Posterior vena cava (tissue), 2 donors: ENCODE measurements at regions of chr20 and their contacts with region 1.

Region 1: DNA sequence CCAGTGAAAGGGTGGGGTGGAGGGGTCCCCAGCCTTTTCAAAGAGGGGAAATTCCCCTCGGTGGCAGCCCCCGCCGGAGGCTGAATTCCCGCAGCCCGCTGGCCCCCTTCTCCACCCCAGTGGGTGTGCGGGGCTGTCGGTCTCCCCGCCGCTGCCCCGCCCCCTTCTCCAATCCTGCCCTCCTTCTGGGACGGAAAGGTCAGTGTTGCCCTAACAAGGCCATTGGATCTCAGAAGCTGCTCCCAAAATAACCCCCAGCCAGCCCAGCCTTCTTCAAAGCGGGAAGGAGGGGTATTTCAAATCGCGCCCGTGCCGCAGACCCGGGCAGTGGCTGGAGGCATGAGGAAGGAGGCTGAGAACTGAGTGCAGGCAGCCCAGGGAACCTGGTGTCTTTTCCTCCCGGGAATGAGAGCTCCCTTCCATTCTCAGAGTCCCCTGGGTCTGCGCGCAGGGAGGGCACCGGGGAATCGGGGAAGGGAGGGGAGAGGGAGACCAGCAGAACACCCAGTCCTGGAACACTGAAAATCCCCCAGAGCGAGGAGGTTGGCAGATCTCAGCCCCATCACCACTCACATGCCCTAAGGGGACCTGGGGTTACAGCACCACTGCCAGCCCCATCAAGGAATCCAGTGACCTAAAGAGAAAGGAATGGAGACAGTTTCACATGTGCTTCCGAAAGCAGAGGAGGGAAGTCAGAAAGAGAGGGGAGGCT is at the start of gene JPH2:
- DNase-seq: peak; percentile 84
- total RNA-seq, gene JPH2: 121 to 130 TPM

Region 2: GRCh38 chr20:44115762-44116644 is 71.2 kb before region 1 on chr20:
- intact Hi-C with region 1: loop called (anchors 5 kb)
- DNase-seq: no peak

Region 3: DNA sequence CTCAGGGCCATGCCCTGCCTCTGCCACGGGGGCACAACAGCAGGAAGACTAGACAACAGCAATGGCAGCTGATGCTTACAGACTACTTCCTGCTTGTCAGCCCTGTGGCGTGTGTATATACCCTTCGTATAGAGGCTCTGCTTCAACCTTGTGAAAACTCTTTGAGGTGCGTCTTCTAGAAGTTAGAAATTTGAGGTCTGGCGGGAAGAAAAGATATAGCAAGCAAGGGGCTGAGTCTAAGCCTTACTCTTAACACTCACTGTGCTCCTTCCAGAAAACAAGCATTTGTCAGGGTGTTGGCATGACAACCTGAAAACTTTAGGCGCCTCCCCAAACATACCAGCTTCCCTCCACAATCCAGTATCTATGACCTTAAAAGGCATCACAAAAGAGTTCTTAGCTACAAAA is 33.6 kb before region 1 on chr20:
- intact Hi-C with region 1: loop called in 1 of 2 experiments (anchors 5 kb)
- DNase-seq: no peak